Posterior vena cava (tissue), 2 donors: ENCODE measurements at regions of chr11 and their contacts with region 1.

Region 1: DNA sequence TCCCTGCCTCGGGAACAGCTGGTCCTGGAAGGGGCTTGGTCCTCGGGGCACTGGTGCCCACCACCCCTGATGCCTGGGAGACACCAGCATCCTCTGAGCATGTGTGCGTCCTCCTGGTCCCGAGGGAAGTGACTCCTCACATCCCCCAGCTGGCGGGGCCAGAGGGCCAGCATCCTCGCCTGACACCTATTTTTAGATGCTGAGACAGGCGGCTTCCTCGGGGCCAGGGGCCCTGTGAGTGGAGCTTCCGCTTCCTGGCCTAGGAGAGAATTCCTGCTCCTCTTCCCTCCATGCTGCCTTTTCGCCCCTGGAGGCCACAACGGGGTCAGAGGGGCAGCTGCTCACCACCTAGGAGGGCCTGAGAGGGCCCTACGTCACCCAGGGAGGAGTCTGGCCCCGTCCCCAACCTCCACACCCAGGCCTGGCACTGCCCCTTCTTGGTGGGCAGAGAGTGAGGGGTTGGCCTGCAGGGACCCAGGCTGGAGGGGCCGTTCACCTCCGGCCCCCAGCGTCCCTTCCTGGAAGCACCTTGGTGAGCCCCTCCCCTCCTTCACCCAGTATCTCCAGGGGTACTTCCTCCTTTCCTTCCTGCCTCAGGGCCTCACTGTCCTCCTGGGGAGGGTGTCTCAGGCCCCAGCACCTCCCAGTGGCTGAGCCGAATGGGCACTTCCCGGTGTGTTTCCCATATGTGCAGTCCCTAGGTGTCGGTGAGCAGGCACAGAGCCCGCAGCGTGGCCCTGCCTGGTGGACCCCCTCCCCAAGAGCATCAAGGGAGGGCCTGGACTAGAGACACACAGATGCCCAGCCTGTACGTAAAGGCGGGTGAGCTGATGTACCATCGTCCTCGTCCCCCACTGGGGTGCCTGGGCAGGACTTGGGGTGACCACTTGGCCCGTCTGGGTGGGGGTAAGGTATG is 6.1 kb downstream of the CD81 start:
- DNase-seq: no peak

Region 2: GRCh38 chr11:1931341-1932099 is 451.7 kb before region 1 on chr11:
- intact Hi-C with region 1: no loop called
- DNase-seq: peak; percentile 94

Region 3: GRCh38 chr11:2256923-2257716 is 126.1 kb before region 1 on chr11:
- intact Hi-C with region 1: no loop called
- DNase-seq: no peak

Region 4: DNA sequence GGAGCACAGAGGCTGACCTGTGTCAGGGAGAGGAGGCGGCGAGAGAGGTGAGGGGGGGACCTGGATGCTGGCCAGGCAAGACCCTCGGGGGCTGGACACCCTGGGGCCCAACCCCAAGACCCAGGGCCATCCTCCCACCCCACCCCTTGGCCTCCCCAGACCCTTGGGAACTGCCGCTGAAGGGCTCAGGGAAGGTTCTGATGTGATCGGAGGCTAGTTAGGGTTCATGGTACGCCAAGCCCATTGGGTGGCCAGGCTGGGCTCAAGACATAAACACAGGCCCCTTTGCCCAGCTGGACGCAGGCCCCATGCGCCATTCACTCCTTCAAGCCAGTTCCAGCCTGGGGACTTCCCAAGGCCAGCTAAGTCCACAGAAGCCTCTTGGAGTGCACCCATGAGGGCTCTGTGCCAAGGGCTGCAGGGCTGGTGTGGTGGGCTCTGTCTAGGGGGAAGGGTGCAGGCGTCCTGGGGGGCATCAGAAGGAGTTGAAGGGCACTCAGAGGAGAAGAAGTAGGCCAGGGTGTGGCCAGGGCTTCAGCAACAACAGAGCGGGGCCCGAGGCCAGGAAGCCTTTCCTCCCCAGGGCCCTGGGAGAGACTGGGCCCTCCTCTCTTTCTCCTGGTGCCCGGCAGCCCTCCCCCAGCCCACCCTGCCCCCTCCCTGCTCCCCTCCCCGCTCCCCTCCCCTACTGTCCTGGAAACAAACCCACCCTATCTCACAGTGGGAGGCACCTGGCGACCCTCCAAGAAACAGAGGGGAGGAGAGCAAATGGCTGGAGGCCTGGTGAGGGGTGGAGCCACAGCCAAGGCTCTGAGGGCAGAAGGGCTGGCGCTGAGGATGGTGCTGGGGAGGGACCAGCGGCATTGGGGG is 68.4 kb before region 1 on chr11:
- intact Hi-C with region 1: loop called in 1 of 2 experiments (anchors 5 kb)
- DNase-seq: peak; percentile 92

Region 5: GRCh38 chr11:2366261-2366660 is 16.9 kb before region 1 on chr11:
- intact Hi-C with region 1: no loop called
- DNase-seq: peak; percentile 75

Region 6: GRCh38 chr11:2462908-2463765 is 79.9 kb after region 1 on chr11:
- intact Hi-C with region 1: no loop called
- DNase-seq: peak; percentile 83